Left cardiac atrium (tissue), 4 donors: ENCODE measurements at regions of chr1 and their contacts with region 1.

Region 1: GRCh38 chr1:221435504-221435904 is 306.4 kb downstream of the DUSP10 start:
- DNase-seq: no peak
- ATAC-seq: peak; percentile 20 to 56

Region 2: GRCh38 chr1:220810179-220810653 is 625.3 kb before region 1 on chr1:
- intact Hi-C with region 1: loop called in 1 of 2 experiments (anchors 5 kb)
- DNase-seq: peak; percentile 87
- ATAC-seq: peak; percentile 87 to 93

Region 3: DNA sequence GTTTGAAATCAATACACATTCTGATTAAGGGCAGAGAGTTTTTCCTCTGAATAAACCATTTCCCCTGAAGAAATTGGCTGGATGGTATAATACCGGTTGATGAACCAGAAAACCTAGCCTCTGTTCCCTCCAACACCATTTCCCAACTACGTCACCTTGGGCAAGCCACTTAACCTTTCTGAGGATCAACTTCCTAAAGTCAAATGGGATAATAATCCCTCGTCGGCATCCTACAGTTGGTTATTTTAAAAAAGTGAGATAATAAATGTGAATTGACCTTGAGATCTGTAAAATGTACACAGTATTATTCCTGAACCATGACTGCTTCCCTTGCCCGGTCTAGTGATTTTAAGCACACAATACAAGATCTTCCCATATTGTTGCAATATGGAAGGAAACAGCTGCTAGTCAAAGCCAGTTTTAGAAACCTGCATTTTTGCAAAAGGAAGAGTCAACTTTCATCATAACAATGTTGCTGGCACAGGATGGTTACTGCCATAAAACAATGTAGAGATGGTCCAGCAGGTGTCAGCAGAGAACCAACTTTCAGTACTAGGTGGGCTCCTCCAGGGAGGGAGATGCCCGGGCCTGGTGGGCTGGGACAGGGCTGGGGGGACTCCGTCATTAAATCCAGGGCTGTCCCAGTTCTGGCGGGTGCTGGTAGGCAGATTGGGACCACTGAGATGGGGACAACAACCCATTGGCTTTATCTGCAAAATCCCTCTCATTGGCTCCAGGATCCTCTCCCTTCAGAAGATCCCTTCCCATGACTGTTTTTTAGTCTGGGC is 561.4 kb before region 1 on chr1:
- intact Hi-C with region 1: loop called (anchors 2 to 10 kb)
- DNase-seq: no peak
- ATAC-seq: peak in 1 of 2 donors; percentile 20

Region 4: DNA sequence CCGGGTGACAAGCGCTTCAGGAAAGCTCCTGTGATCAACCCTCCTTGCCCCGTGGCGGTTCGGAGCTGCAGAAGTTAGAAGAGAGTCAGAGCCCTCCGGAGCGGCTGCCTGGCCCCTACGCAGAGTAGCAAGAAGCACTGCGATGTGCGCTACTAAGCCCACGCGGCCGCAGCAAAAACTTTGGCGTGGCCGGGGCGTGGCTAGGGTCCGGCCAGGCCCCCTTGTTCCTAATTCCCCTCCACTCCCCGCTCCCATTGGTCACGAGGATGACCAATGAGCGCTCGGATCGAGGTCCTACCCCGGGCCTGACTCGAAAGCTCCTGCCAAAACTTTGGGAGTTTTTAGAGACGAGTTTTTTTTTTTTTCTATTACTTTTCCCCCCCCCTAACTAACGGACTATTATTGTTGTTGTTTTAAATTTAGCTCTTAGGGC is 556.4 kb before region 1 on chr1 and contains the start of gene HLX:
- intact Hi-C with region 1: loop called (anchors 2 to 10 kb)
- DNase-seq: peak; percentile 93
- ATAC-seq: peak; percentile 91 to 95
- total RNA-seq, gene HLX: 4.5 to 10.7 TPM

Region 5: DNA sequence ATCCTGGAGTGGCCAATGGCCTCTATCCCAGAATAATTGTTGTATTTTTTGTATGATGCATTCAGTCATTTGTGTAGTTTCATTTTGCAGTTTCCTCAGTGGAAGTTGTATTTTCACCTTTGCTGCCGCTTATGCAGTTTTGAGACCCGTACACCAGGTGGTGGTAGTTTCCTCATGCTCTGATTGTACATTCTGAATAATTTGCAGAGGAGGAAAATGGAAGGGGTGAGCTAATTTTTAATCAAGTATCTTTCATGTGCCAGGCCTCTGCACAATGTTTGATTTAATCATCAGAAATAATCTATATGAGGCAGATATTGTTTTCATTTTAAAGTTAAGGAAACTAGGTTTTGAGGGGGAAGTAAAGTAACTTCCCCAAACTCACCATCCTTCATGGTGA is 526.7 kb before region 1 on chr1:
- intact Hi-C with region 1: loop called in 1 of 2 experiments (anchors 10 kb)
- DNase-seq: no peak
- ATAC-seq: peak in 1 of 2 donors; percentile 38

Region 6: DNA sequence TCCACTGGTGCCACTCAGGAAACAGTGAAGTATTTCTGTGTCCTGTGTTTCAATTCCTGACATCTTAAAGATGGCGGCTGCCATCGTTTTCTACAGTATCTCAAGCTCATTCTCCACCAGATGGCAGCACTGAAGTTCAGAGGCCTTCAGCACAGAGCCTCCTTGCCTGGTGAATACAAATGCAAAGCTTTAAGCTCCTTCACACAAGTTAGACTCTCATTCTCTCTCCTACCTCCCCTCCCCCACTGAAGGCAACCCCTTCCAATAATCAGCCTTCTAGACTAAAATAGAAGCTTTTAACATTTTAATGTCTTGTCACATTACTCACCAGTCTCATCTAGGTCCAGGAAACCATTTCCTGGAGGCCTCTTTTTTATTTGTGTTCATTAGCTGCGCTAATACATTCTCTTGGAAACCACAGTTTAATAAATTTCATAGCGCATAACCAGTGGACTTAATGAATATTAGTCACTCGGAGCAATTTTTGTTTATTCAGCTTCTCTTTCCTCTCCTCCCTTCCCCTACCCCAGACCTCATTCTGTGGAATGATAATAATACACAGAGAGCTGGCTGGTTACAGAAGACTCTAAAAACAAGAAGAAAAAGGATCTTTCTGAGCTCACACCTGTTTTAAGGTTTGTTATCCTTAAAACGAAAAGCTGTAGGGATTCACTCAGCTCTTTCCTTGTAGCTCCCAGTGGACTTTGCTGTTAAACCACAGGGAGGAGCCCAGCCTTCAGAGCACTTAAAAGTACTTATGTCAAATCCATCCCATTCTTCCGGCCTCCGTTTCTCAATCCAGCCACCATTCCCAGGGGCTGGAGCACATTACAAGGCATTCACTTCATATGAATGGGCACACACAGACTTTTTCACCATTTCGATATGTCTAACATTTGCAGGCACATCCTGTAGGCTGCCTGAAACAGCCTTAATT is 171.4 kb before region 1 on chr1:
- intact Hi-C with region 1: loop called in 1 of 2 experiments (anchors 5 kb)
- DNase-seq: peak; percentile 50
- ATAC-seq: peak; percentile 72 to 73

Region 7: DNA sequence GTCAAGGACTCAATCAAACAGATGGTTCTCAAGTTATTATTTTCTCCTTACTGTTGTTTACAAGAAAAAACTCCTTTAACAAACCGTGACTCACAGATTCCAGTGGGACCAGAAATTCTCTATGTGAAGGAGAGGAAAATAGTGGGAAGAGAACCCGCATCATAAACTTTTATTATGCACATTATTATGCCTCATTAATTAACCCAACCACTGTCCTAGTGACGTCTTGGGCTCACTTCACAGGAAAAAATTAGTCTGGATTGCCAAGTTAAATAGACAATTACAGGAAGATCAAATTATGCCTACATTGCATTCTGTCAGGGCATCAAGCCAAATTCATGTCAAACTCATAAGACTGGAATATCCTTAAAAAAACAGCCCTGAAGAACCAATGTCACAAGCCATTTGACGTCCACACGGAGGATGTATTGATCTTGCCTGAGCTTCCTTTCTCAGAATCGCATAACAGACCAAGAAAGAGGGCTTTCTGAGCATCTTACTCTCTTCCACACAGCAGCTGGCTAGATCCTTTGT is 41.4 kb before region 1 on chr1:
- intact Hi-C with region 1: no loop called
- DNase-seq: no peak
- ATAC-seq: peak; percentile 23 to 59

Region 8: GRCh38 chr1:221576268-221576667 is 140.8 kb after region 1 on chr1:
- intact Hi-C with region 1: no loop called
- DNase-seq: no peak
- ATAC-seq: peak in 1 of 2 donors; percentile 26